Motor neuron (in vitro differentiated cells): ENCODE measurements at regions of chr22 and their contacts with region 1.

Region 1: GRCh38 chr22:25702040-25702439 is 39.9 kb upstream of the MYO18B start:
- ATAC-seq: peak in 3 of 8 experiments; percentile 27 to 45 (median 27)
- H3K4me3 ChIP-seq: no peak overlapping the region
- H3K27ac ChIP-seq: no peak overlapping the region
- H3K4me1 ChIP-seq: peaks cover 2 to 5% of the 10 kb centered on the region in 2 donors

Region 2: DNA sequence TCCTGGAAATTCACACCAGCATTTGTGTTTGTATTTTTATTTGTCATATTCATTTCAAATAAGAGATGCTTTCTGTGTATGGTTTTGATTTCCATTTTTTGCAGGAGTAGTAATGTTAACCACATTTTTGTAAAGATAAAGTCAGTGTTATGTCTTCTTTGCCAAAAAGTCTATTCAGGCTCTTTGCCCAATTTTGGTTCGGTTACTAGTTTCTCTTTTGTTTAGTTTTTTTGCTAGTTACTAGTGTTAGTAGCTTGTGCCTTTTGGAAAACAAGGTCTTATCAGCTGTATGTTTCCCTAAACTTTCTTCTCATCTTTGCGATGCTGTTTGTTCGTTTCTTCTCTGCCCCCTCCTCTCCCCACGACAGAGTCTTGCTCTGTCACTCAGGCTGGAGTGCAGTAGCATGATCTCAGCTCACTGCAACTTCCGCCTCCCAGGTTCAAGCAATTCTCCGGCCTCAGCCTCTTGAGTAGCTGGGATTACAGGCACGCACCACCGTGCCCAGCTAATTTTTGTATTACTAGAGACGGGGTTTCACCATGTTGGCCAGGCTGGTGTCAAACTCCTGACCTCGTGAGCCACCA is 249.8 kb before region 1 on chr22:
- in situ Hi-C with region 1: loop called in 3 of 9 experiments (anchors 25 kb)
- ATAC-seq: peak in 1 of 8 experiments; percentile 20
- H3K4me3 ChIP-seq: no peak overlapping the region
- H3K27ac ChIP-seq: no peak overlapping the region
- H3K4me1 ChIP-seq: peaks cover 14 to 18% of the 10 kb centered on the region in 2 donors

Region 3: DNA sequence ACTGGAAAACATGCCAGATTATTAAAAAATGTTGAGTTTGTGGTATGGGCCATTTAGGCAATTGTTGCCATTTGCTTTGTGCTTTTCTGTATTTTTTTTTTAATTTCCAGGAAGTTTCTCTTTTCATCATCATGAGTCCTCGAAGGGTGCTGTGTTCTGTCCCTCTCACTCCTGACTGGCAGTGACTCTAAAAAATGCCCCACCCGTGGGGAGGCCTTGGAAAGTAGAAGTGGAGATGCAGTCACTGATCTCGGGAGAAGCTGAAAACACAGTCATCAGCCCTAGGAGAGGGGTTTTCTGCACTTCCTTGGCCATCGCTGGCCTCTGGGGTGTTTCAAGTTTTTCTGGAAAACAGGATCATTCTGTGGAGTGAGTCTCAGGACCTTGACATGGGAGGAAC is 236.1 kb before region 1 on chr22:
- in situ Hi-C with region 1: loop called in 5 of 9 experiments (anchors 10 to 25 kb)
- ATAC-seq: peak in 2 of 8 experiments; percentile 27 to 83
- H3K4me3 ChIP-seq: no peak overlapping the region
- H3K27ac ChIP-seq: no peak overlapping the region
- H3K4me1 ChIP-seq: no peaks in the 10 kb centered on the region

Region 4: DNA sequence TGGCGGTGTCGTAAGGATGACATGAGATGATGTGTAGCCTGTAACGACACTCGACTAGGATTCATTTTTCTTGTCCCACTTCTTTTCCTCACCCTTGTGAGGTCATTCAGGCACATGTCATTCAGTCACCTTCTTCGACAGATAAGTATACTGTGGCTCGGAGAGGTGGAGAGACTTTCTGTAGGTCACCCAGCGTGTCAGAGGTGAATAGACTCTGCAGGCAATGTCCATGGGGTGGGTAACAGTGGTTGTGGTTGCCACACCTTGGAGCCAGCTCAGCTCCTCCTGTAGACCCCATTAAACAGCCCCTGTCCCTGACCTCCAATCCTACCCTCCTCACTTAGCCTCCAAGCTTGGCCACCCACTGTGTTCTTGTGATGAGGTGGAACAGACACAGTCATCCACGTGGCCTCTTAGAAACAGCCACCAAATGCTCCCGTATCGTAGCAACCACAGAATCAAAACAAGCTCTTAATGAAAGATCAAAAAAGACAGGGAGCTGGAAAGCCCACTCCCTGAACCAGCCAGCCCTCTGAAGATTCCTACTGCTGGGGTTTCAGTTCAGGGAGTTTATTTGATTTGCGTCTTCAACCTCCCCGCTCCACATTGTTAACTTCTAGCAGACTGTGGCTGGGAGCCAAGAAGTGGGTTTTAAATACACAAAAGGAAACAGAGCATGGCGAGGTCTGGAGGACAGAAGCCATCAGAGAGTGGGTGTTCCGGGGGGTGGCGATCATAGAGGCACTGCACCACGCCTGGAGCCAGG is 226.6 kb before region 1 on chr22:
- in situ Hi-C with region 1: loop called in 5 of 9 experiments (anchors 5 to 25 kb)
- ATAC-seq: peak in 7 of 8 experiments; percentile 70 to 94 (median 90)
- H3K4me3 ChIP-seq: no peak overlapping the region
- H3K27ac ChIP-seq: peak overlapping the region in 1 of 2 donors; percentile 22
- H3K4me1 ChIP-seq: peaks cover 0 to 10% of the 10 kb centered on the region in 2 donors